Common myeloid progenitor, CD34-positive (primary cell): ENCODE measurements at regions of chr6 and their contacts with region 1.

Region 1: DNA sequence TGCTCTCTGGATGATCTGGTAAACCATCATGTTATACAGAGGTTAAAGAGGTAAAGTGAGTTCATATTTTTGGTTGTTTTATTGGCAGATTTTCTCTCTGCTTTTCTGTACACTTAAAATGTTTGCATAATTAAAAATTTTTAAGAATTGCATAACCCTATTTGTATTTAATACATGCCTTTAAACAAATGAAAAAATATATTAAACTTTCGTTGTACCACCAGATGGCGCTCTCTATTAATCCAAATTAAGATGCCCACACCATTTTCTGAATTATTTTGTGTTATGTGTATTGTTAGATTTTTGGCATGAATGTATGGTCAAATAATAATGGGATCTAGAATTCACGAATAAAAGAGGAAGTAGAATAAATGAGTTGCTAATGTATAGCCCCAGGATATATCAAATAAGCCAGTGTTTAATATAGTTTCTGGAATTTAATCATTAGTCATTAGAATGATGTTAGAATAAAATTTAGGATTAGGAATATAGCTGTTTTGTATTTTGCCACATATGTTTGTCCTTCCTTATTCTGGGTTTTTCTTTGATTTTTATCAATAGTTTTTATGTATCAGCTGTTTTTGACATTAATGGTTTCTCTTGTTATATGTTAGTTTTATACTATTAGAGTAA is 38.9 kb downstream of the SMAP1 start:
- DNase-seq: peak; percentile 46 to 72 (median 65)
- H3K4me3 ChIP-seq: no peak overlapping the region
- H3K27ac ChIP-seq: no peak overlapping the region
- H3K4me1 ChIP-seq: no peaks in the 10 kb centered on the region
- H3K27me3 ChIP-seq: no peaks in the 10 kb centered on the region

Region 2: DNA sequence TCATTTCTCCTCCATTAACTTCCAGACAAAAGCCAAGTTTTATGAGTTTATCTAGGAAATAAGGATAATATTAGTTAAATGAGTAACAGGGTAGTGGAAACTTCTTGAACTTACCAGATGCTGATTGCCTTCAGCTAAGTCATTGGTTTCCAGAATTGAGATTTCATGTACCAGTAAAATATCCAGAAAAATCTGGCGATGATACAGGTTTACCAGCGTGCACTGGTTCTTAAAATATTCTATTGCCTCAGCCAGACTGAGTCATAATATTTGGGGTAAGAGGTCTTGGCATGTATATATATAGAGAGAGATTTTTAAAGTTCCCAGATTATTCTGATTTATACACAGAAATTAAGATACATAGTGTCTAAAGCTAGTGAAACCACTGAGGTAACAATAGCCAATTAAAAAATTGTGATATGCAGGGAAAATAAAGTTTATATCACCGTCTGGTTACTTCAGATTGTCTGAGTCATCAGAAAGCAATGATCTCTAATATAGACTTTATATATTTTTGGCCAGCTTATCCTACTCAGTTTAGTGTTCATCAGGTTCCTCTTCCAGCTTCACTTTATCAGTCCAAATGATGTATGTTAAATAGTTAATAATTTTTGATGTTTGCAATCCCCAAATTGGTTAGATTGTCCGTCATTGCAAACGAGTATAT is 179.4 kb before region 1 on chr6:
- CTCF ChIA-PET with region 1: no interaction called
- POLR2A ChIA-PET with region 1: no interaction called
- DNase-seq: no peak
- H3K4me3 ChIP-seq: no peak overlapping the region
- H3K27ac ChIP-seq: no peak overlapping the region
- H3K4me1 ChIP-seq: no peaks in the 10 kb centered on the region
- H3K27me3 ChIP-seq: no peaks in the 10 kb centered on the region

Region 3: GRCh38 chr6:70586114-70586513 is 120.5 kb before region 1 on chr6:
- CTCF ChIA-PET with region 1: no interaction called
- POLR2A ChIA-PET with region 1: no interaction called
- DNase-seq: no peak
- H3K4me3 ChIP-seq: no peak overlapping the region
- H3K27ac ChIP-seq: no peak overlapping the region
- H3K4me1 ChIP-seq: no peaks in the 10 kb centered on the region
- H3K27me3 ChIP-seq: no peaks in the 10 kb centered on the region

Region 4: GRCh38 chr6:70717038-70717801 is 10.6 kb after region 1 on chr6:
- CTCF ChIA-PET with region 1: interaction called, 10 read pairs
- POLR2A ChIA-PET with region 1: no interaction called
- DNase-seq: no peak
- H3K4me3 ChIP-seq: no peak overlapping the region
- H3K27ac ChIP-seq: no peak overlapping the region
- H3K4me1 ChIP-seq: no peaks in the 10 kb centered on the region
- H3K27me3 ChIP-seq: no peaks in the 10 kb centered on the region

Region 5: DNA sequence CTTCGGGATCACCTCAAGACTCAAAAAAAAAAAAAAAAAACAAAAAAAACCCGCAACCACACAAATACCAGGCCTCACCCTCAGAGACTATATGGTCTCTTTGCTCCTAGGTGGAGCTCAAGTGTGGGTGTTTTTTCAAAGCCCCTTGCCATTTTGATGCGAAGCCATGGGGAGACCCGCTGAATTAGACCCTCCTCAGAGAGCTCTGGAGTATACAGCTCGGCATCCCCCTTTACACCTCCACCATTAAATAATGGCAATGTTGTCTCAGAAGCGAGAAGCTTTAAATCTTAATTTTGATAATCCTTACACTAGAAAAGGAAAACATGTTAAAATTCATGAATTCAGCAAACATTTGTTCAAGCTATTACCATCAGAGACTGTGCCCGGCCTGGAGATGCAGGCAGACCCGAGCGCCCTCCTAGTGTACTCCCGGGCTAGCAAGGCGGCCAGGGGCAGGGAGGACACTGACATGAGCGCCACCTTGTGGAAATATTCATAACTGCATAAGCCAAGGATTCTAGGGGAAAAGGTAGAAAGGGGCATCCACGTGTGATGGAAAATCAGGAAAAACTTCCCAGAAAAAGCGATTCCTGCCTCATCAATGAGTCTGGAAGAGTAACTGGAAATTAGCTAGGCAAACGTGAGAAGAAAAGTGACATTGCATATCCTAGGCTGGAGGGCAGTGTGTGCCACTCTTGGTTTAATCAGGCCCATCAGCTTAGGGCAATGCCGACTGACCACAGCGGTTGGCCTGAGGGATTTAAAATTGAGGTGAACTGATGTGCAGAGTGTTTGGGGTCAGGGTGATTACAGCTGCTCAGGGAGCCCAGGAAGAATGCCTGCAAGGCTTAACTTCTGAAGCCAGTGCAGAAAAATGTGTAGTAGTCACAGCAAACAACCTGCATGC is 177.7 kb after region 1 on chr6:
- CTCF ChIA-PET with region 1: interaction called, 52 read pairs
- POLR2A ChIA-PET with region 1: no interaction called
- DNase-seq: peak; percentile 28 to 59 (median 55)
- H3K4me3 ChIP-seq: no peak overlapping the region
- H3K27ac ChIP-seq: no peak overlapping the region
- H3K4me1 ChIP-seq: no peaks in the 10 kb centered on the region
- H3K27me3 ChIP-seq: peaks cover 0 to 2% (median 0%) of the 10 kb centered on the region in 5 experiments